ENCODE measurements at regions of chr5 and their contacts with region 1.

Region 1: DNA sequence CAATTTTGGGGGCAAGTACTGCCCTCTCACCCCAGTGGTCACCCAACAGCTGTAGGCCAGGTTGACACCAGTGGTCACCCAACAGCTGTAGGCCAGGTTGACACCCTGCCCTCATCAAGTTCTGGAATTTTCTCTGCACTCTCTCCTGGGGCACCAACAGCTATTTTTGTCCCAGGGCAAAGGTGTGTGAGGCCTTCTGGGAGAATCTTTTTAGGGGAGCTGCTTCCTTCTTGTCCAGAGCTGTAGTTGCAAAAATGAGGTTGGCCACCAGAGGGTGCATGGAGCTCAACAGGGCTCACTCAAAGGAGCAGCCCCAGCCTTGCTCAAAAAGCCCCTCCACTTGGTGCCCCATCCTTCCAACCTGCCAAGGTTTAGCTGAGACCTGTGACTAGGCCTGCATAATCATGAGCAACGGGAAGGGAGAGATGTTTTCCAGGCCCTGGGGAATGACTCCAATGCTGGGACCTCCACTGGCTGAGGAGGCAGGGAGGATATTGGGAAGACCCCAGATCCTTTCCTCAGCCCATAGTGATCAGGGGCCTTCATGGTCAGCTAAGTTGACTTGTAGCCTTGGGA is 10.6 kb upstream of the P4HA2 start:
- DNase-seq: peak; percentile 80
- H3K4me3 Mint-ChIP-seq: no peak overlapping the region
- H3K27ac Mint-ChIP-seq: no peak overlapping the region
- H3K4me1 Mint-ChIP-seq: peaks cover under 1% of the 10 kb centered on the region
- H3K27me3 Mint-ChIP-seq: no peaks in the 10 kb centered on the region
- CTCF ChIP-seq: peak; percentile 96

Region 2: GRCh38 chr5:132205385-132206125 is 32.7 kb before region 1 on chr5:
- CTCF ChIA-PET with region 1: interaction called, 21 read pairs
- POLR2A ChIA-PET with region 1: interaction called, 3 read pairs
- intact Hi-C with region 1: no loop called
- DNase-seq: no peak
- H3K4me3 Mint-ChIP-seq: no peak overlapping the region
- H3K27ac Mint-ChIP-seq: no peak overlapping the region
- H3K4me1 Mint-ChIP-seq: peaks cover 12% of the 10 kb centered on the region
- H3K27me3 Mint-ChIP-seq: no peaks in the 10 kb centered on the region
- CTCF ChIP-seq: no peak

Region 3: DNA sequence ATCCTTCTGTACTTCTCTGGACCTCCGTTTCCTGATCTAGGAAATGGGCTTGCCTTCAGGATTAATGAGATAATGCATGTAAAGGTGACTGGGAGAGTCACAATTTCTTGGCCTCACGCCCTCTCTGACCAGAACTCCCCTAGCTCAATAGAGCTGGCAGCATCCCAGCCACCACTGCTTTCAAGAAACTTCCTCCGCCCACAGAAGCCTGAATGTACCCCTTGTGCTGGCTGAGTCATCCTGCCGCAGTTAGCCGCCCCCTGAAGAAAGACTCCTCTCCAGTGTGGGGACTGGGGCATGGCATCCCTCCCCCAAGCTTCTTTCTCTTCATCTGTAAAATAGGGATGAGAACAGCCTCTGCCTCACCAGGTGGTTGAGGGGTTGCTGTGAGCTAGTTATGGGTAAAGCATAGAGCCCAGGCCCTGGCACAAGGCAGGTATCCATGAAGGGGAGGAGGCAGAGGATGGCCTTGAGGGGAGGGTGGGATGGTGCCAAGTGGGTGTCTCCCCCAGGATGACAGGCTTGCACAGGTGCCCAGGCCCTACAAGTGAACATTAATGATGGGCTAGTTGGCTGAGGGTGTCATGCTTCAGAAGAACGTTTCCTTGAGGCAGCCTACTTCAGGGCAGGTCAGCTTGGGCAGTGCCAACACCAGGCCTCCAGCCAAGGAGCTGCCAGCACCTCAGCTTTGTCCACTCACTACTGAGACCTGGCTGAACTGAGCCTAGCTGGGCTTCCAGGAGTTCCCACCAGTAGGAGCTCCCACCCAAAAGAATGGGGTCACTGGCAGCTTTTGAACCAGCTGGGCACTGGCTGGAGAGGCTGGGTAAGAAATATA is 22.7 kb after region 1 on chr5:
- CTCF ChIA-PET with region 1: interaction called, 181 read pairs
- POLR2A ChIA-PET with region 1: interaction called, 13 read pairs
- intact Hi-C with region 1: loop called (anchors 2 kb)
- DNase-seq: peak; percentile 97
- H3K4me3 Mint-ChIP-seq: peak overlapping the region; percentile 83
- H3K27ac Mint-ChIP-seq: peak overlapping the region; percentile 74
- H3K4me1 Mint-ChIP-seq: peaks cover 68% of the 10 kb centered on the region
- H3K27me3 Mint-ChIP-seq: no peaks in the 10 kb centered on the region
- CTCF ChIP-seq: no peak

Region 4: GRCh38 chr5:132301344-132302271 is 63.4 kb after region 1 on chr5:
- CTCF ChIA-PET with region 1: interaction called, 69 read pairs
- POLR2A ChIA-PET with region 1: no interaction called
- intact Hi-C with region 1: no loop called
- DNase-seq: no peak
- H3K4me3 Mint-ChIP-seq: no peak overlapping the region
- H3K27ac Mint-ChIP-seq: no peak overlapping the region
- H3K4me1 Mint-ChIP-seq: peaks cover 57% of the 10 kb centered on the region
- H3K27me3 Mint-ChIP-seq: no peaks in the 10 kb centered on the region
- CTCF ChIP-seq: no peak

Region 5: GRCh38 chr5:132369474-132370180 is 131.4 kb after region 1 on chr5 and contains the start of gene SLC22A5:
- CTCF ChIA-PET with region 1: interaction called, 37 read pairs
- POLR2A ChIA-PET with region 1: interaction called, 7 read pairs
- intact Hi-C with region 1: no loop called
- DNase-seq: peak; percentile 84
- H3K4me3 Mint-ChIP-seq: peak within 1 kb of the TSS; percentile 79
- H3K27ac Mint-ChIP-seq: peak within 1 kb of the TSS; percentile 39
- H3K4me1 Mint-ChIP-seq: peaks cover 44% of the 10 kb centered on the region
- H3K27me3 Mint-ChIP-seq: no peaks in the 10 kb centered on the region
- CTCF ChIP-seq: no peak
- total RNA-seq, gene SLC22A5: 122 and 167 TPM in 2 replicates

Region 6: GRCh38 chr5:132506094-132506692 is 267.9 kb after region 1 on chr5:
- CTCF ChIA-PET with region 1: interaction called, 54 read pairs
- POLR2A ChIA-PET with region 1: interaction called, 3 read pairs
- intact Hi-C with region 1: no loop called
- DNase-seq: peak; percentile 78
- H3K4me3 Mint-ChIP-seq: no peak overlapping the region
- H3K27ac Mint-ChIP-seq: no peak overlapping the region
- H3K4me1 Mint-ChIP-seq: peaks cover 23% of the 10 kb centered on the region
- H3K27me3 Mint-ChIP-seq: no peaks in the 10 kb centered on the region
- CTCF ChIP-seq: peak; percentile 47